ENCODE measurements at regions of chr14 and their contacts with region 1.

Region 1: DNA sequence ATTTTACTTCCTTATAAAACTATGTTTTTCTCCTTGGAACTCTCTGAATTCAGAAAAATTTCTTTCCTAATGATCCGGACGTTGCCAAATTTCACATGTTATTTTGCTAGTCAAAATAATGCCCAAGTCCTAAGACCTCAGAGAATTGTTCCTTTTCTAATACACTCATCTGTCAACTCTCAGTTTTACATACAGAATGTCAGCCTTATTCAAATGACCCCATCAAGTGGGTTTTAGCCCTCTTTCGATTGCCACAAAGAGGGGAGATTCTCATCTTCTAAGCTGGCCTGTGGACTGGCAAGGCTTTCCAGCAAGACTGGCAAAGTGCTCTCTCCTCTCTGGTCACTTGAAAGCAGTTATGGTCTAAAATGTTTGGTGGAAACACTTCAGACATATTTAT is 99.3 kb upstream of the GPHB5 start:
- DNase-seq: no peak
- H3K4me3 Mint-ChIP-seq: no peak overlapping the region
- H3K27ac Mint-ChIP-seq: no peak overlapping the region
- H3K4me1 Mint-ChIP-seq: no peaks in the 10 kb centered on the region
- H3K27me3 Mint-ChIP-seq: no peaks in the 10 kb centered on the region

Region 2: GRCh38 chr14:63032076-63032475 is 385.9 kb before region 1 on chr14:
- intact Hi-C with region 1: no loop called
- DNase-seq: no peak
- H3K4me3 Mint-ChIP-seq: no peak overlapping the region
- H3K27ac Mint-ChIP-seq: no peak overlapping the region
- H3K4me1 Mint-ChIP-seq: no peaks in the 10 kb centered on the region
- H3K27me3 Mint-ChIP-seq: no peaks in the 10 kb centered on the region

Region 3: GRCh38 chr14:63375771-63376170 is 42.2 kb before region 1 on chr14:
- intact Hi-C with region 1: loop called (anchors 1 kb)
- DNase-seq: no peak
- H3K4me3 Mint-ChIP-seq: no peak overlapping the region
- H3K27ac Mint-ChIP-seq: no peak overlapping the region
- H3K4me1 Mint-ChIP-seq: no peaks in the 10 kb centered on the region
- H3K27me3 Mint-ChIP-seq: no peaks in the 10 kb centered on the region

Measured in activated T-helper 1 cell treated with anti-CD3 and anti-CD28 coated beads, Interleukin-12 subunit alpha, Interleukin-12 subunit beta, Interleukin-2, Interleukin-4 antibody, amounts not matched to agents 30 ng/mL and 10 ng/mL and 1 ng/mL, durations not matched to agents 14 hours and 24 hours and 36 hours (primary cell).